ENCODE measurements at regions of chr2 and their contacts with region 1.

Region 1: DNA sequence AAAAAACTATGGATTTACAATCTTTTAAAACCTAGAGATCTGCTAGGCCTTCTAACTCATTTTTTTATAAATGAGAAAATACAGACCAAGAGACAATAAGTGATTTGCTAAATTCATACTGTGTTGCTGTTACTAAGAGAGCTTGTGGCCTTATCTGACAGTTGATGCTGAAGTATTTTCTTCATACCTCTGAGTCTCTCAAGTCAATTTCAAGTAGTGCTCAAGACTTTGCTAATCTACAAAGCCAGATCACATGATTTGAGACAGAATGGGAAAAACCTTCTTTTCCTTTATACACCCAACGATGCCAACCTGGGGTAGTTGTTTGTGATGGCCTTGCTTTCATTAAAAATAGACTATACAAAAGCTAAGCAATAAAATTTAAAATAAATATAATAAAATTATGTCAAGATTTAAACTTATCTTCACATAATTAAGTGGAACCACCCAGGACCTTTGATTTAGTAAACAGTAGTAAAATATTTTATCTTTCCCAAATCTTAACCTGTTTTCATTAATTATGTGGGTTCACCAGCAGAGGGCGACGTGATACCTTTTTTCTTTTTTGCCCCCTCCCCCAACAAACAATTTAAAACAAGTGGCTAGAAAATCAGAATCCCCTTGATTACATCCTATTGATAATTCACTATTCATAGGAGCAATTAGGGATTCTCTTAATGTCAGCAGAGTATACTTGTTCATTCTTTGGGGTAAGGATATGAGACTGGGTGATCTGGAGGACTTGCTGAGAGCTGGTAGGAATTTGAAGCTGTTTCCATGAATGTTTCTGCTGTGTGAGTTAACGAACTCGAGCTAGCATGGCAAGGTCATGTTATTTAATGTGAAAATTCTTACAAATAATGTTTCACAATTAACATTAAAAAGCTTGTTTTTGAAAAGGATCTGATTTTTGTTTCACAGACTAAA is 49.6 kb upstream of the SLC5A7 start:
- DNase-seq: no peak
- ATAC-seq: no peak

Region 2: GRCh38 chr2:107428781-107429180 is 507.9 kb before region 1 on chr2:
- intact Hi-C with region 1: no loop called
- DNase-seq: no peak
- ATAC-seq: no peak

Region 3: GRCh38 chr2:107570876-107571275 is 365.8 kb before region 1 on chr2:
- intact Hi-C with region 1: loop called in 1 of 2 experiments (anchors 10 kb)
- DNase-seq: no peak
- ATAC-seq: no peak

Region 4: DNA sequence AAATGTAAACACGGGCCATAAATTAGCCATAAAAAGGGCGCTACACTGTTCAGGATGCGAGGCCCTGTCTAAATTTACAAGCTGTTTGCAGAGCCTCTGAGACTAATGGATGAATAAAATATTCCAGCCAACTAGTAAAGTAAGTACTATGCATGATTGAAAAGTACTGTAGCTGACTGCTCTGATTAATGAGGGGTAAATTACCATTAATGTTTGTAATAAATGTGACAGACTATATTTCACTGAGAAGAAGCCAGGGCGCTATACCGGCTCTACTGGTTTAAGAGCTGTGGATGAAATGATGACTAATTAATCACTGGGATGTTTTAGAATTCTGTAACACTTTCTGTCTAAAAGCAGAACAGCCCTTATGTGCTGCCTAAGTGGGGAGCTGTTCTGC is 164.3 kb before region 1 on chr2:
- intact Hi-C with region 1: no loop called
- DNase-seq: no peak
- ATAC-seq: no peak

Region 5: GRCh38 chr2:108058576-108059137 is 122.0 kb after region 1 on chr2:
- intact Hi-C with region 1: no loop called
- DNase-seq: no peak
- ATAC-seq: no peak

Region 6: GRCh38 chr2:108184419-108184818 is 247.7 kb after region 1 on chr2:
- intact Hi-C with region 1: loop called in 1 of 2 experiments (anchors 5 kb)
- DNase-seq: no peak
- ATAC-seq: no peak